K562 (cell line): ENCODE measurements at regions of chr11 and their contacts with region 1.

Region 1: DNA sequence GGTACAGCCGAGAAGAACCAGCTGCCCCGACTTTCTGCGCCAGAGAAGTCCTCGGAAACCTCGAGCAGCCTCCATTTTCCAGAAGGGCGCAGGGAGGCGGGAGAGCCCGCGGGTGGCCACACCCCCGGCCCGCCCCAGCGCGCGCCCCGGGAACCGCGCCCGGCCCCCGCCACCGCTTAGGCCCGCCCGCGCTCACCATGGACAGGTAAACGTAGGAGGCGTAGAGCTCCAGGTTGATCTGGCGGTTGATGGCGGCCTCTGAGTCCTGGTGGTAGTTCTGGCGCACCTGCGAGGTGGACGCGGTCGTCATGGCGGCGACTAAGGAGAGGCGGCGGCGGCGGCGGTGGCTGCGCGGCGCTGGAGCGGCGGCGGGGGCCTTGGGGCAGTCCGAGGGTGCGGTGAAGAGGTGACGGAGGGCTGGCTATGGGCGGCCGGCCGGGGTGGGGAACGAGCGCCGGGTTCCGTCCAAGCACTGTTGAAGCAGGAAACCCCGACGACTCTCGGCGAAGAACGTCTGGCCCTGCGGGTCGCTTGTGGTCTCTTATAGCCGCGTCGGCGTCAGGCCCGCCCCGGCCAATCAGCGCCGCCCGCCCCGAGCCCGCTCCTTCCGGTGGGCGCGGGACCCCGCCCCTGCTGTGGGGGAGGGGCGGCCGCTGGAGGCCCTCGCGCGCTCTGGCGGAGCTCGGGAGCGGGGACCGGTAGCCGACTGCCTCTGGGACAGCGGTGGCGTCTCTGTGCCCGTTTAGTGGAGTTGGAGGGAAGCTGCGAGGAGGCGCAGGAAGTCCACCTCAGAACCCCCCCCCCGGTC is at the start of gene FTH1:
- DNase-seq: peak; percentile 90 to 96 (median 92)
- ATAC-seq: peak; percentile 57
- H3K4me3 ChIP-seq: peak within 1 kb of the TSS; percentile 80
- H3K27ac ChIP-seq: peak within 1 kb of the TSS; percentile 89
- H3K4me1 ChIP-seq: peaks cover 46 to 52% of the 10 kb centered on the region in 2 experiments
- H3K27me3 ChIP-seq: no peaks in the 10 kb centered on the region
- CTCF ChIP-seq: no peak
- EP300 ChIP-seq: peak; percentile 54
- POLR2A ChIP-seq: peak; percentile 99
- RAD21 ChIP-seq: peak; percentile 15 to 28; a peak in 1 of 4 replicates
- polyA plus RNA-seq, gene FTH1: 370 to 426 TPM

Region 2: DNA sequence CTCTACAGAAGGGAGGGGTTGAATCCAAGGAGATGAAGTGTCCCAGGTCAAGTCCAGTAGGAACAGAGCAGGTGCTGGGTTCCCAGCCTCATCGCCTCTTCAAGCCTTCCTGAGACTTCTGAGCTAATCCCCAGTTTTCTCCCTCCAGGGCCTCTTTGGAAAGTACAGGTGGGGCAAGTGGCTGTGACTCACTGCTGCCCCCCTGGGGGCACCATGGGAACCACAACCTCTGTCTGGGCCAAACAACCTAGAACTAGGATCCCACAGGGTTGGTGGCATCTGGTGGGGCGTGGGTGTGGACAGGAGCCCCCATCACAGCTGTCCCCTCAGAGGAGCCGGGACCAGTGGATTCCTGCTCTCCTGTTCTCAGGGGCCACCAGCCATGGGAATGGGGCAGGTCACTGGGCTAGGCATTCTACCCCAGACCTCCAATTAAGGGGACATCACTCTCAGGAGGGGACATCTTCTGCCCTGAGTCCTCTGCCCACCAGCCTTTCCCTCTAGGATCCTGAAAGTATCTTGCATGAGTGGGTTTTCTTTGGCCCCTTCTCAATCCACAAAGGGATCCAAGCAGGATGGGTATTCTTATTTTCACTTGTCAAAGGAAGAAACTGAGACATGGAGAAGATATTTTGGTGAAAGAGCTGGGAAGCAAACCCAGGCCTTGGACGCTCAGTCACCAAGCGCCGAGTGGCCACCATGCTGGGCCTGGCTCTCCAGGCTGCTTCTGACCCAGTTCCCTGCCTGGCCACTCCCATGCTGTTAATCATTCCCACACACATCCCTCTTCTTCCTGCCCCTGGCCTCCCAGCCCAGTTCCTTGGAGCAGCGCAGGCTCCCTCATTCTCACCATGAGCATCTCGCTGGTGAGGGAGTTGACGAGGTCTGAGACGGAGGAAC is 434.9 kb before region 1 on chr11:
- CTCF ChIA-PET with region 1: no interaction called
- POLR2A ChIA-PET with region 1: no interaction called
- in situ Hi-C with region 1: no loop called
- intact Hi-C with region 1: no loop called
- DNase-seq: peak; percentile 71 to 88 (median 85)
- ATAC-seq: peak; percentile 90
- H3K4me3 ChIP-seq: no peak overlapping the region
- H3K27ac ChIP-seq: no peak overlapping the region
- H3K4me1 ChIP-seq: peaks cover 0 to 15% of the 10 kb centered on the region in 2 experiments; a peak in 2 of 5 replicates
- H3K27me3 ChIP-seq: peaks cover 33 to 72% of the 10 kb centered on the region in 2 experiments; a peak in 4 of 5 replicates
- CTCF ChIP-seq: peak; percentile 86 to 95 (median 90)
- EP300 ChIP-seq: no peak
- POLR2A ChIP-seq: no peak
- RAD21 ChIP-seq: peak; percentile 19 to 61; a peak in 2 of 4 replicates

Region 3: DNA sequence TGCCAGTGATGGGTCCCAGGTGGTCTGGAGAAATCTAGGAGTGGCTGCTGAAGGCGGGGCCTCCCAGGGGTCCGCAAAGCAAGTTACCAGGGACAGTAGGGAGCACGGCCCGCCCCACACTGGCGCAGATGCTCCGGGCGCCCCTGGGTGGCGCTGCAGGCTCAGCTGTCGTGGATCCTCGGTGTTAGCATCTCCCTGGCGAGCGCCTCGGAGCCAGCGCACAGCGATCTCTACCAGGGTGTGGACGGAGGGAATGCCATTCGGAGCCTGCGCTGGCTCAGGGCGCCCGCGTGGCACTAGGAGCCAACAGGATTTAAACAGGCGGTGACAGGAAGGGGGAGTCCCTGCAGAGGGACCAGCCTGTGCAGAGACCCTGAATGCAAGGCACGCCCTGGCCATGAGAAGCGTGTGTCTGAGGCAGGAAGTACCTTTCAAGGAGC is 96.1 kb before region 1 on chr11:
- CTCF ChIA-PET with region 1: no interaction called
- POLR2A ChIA-PET with region 1: interaction called, 20 read pairs
- in situ Hi-C with region 1: no loop called
- intact Hi-C with region 1: no loop called
- DNase-seq: peak; percentile 88 to 93 (median 90)
- ATAC-seq: peak; percentile 94
- H3K4me3 ChIP-seq: no peak overlapping the region
- H3K27ac ChIP-seq: peak overlapping the region; percentile 85
- H3K4me1 ChIP-seq: peaks cover 43 to 76% of the 10 kb centered on the region in 2 experiments
- H3K27me3 ChIP-seq: no peaks in the 10 kb centered on the region
- CTCF ChIP-seq: peak; percentile 91 to 97 (median 96)
- EP300 ChIP-seq: no peak
- POLR2A ChIP-seq: no peak
- RAD21 ChIP-seq: peak; percentile 93 to 96

Region 4: GRCh38 chr11:61978703-61979661 is 11.7 kb after region 1 on chr11:
- CTCF ChIA-PET with region 1: no interaction called
- POLR2A ChIA-PET with region 1: interaction called, 65 read pairs
- in situ Hi-C with region 1: no loop called
- intact Hi-C with region 1: no loop called
- DNase-seq: peak in 1 of 4 experiments; percentile 12
- ATAC-seq: peak; percentile 65
- H3K4me3 ChIP-seq: no peak overlapping the region
- H3K27ac ChIP-seq: no peak overlapping the region
- H3K4me1 ChIP-seq: peaks cover 2 to 9% of the 10 kb centered on the region in 2 experiments; a peak in 4 of 5 replicates
- H3K27me3 ChIP-seq: no peaks in the 10 kb centered on the region
- CTCF ChIP-seq: no peak
- EP300 ChIP-seq: no peak
- POLR2A ChIP-seq: no peak
- RAD21 ChIP-seq: no peak

Region 5: DNA sequence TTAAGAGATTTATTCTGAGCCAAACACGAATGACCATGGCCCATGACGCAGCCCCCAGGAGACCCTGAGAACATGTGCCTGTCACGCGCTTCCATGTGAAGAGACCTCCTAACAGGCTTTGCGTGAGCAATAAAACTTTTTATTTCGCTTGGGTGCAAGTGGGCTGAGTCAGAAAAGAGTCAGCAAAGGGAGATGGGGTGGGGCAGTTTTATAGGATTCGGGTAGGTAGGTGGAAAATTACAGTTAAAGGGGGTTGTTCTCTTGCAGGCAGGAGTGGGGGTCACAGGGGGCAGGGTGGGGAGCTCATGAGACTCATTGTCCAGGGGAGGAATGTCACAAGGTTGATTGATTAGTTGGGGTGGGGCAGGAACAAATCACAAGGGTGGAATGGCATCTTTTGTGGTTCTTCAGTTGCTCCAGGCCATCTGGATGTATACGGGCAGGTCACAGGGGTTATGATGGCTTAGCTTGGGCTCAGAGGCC is 77.4 kb after region 1 on chr11:
- CTCF ChIA-PET with region 1: no interaction called
- POLR2A ChIA-PET with region 1: interaction called, 51 read pairs
- in situ Hi-C with region 1: no loop called
- intact Hi-C with region 1: no loop called
- DNase-seq: no peak
- ATAC-seq: no peak
- H3K4me3 ChIP-seq: no peak overlapping the region
- H3K27ac ChIP-seq: no peak overlapping the region
- H3K4me1 ChIP-seq: peaks cover 13 to 15% of the 10 kb centered on the region in 2 experiments
- H3K27me3 ChIP-seq: peaks cover 0 to 3% of the 10 kb centered on the region in 2 experiments; a peak in 1 of 5 replicates
- CTCF ChIP-seq: no peak
- EP300 ChIP-seq: no peak
- POLR2A ChIP-seq: no peak
- RAD21 ChIP-seq: no peak

Region 6: GRCh38 chr11:62081378-62082291 is 114.3 kb after region 1 on chr11:
- CTCF ChIA-PET with region 1: no interaction called
- POLR2A ChIA-PET with region 1: interaction called, 189 read pairs
- in situ Hi-C with region 1: no loop called
- intact Hi-C with region 1: no loop called
- DNase-seq: peak; percentile 75 to 78 (median 76)
- ATAC-seq: peak; percentile 91
- H3K4me3 ChIP-seq: no peak overlapping the region
- H3K27ac ChIP-seq: no peak overlapping the region
- H3K4me1 ChIP-seq: peaks cover 0 to 5% of the 10 kb centered on the region in 2 experiments; a peak in 3 of 5 replicates
- H3K27me3 ChIP-seq: no peaks in the 10 kb centered on the region
- CTCF ChIP-seq: peak; percentile 90 to 97 (median 96)
- EP300 ChIP-seq: no peak
- POLR2A ChIP-seq: no peak
- RAD21 ChIP-seq: peak; percentile 98

Region 7: GRCh38 chr11:62130696-62131371 is 163.5 kb after region 1 on chr11:
- CTCF ChIA-PET with region 1: no interaction called
- POLR2A ChIA-PET with region 1: interaction called, 11 read pairs
- in situ Hi-C with region 1: no loop called
- intact Hi-C with region 1: no loop called
- DNase-seq: no peak
- ATAC-seq: no peak
- H3K4me3 ChIP-seq: no peak overlapping the region
- H3K27ac ChIP-seq: no peak overlapping the region
- H3K4me1 ChIP-seq: peaks cover 5 to 11% of the 10 kb centered on the region in 2 experiments; a peak in 4 of 5 replicates
- H3K27me3 ChIP-seq: no peaks in the 10 kb centered on the region
- CTCF ChIP-seq: no peak
- EP300 ChIP-seq: no peak
- POLR2A ChIP-seq: no peak
- RAD21 ChIP-seq: no peak